Activated B cell treated with CpG ODN at 0.5 μM for 24 hours (primary cell): ENCODE measurements at regions of chr4 and their contacts with region 1.

Region 1: DNA sequence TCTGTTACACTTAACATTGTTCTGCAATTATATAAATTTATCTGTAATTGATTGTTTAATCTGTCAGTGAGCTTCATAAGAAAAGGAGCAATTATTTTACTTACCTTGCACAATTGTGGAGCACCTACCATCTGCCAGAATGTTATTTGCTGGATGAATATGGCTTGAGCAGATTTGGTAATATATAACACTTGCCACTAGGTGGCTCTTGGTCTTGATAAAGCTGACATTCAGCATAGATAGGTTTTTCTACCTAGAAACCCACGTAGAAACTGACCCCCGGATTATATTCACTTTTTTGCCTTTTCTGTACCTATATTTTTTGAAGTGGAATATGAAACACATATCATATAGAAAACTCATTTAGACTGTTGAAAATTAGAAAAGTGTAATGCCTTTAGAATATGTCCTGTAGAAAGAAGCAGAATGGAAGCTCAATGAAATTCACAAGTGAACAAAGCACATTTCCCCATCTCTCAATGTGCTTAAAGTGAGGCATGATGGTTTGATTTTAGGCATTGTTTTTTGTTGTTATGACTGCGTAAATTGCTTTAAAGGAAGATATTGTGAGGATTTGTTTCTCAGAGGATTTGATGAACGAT is 9.5 kb downstream of the RBPJ start:
- DNase-seq: no peak
- ATAC-seq: peak; percentile 81
- H3K4me3 Mint-ChIP-seq: no peak overlapping the region
- H3K27ac Mint-ChIP-seq: no peak overlapping the region
- H3K4me1 Mint-ChIP-seq: peaks cover 14% of the 10 kb centered on the region
- H3K27me3 Mint-ChIP-seq: no peaks in the 10 kb centered on the region
- CTCF ChIP-seq: peak; percentile 62

Region 2: GRCh38 chr4:25925486-25926201 is 404.6 kb before region 1 on chr4:
- CTCF ChIA-PET with region 1: interaction called, 5 read pairs
- POLR2A ChIA-PET with region 1: no interaction called
- intact Hi-C with region 1: loop called (anchors 2 kb)
- DNase-seq: no peak
- ATAC-seq: peak; percentile 57
- H3K4me3 Mint-ChIP-seq: no peak overlapping the region
- H3K27ac Mint-ChIP-seq: no peak overlapping the region
- H3K4me1 Mint-ChIP-seq: no peaks in the 10 kb centered on the region
- H3K27me3 Mint-ChIP-seq: no peaks in the 10 kb centered on the region
- CTCF ChIP-seq: no peak

Region 3: DNA sequence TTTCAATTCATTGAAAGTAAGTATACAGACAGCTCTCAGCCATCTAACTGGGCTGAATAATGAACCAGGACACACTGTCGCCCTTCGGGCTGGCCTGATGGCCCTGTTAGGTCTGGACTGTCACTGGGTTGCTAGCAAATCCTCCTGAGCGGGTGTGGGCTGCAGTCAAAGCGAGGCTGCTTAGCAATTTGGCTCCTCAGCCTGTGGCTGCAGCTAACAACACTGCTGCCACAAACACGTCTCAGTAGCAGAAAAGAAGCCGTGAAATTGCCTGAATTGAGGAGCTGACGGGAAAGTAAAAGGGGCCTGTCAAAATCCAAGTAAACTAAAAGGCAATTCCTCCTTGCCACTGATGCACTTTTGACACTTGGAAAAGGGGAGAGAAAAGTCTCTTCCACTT is 343.5 kb before region 1 on chr4:
- CTCF ChIA-PET with region 1: interaction called, 12 read pairs
- POLR2A ChIA-PET with region 1: no interaction called
- intact Hi-C with region 1: loop called (anchors 1 kb)
- DNase-seq: no peak
- ATAC-seq: no peak
- H3K4me3 Mint-ChIP-seq: no peak overlapping the region
- H3K27ac Mint-ChIP-seq: no peak overlapping the region
- H3K4me1 Mint-ChIP-seq: peaks cover 16% of the 10 kb centered on the region
- H3K27me3 Mint-ChIP-seq: peaks cover 3% of the 10 kb centered on the region
- CTCF ChIP-seq: no peak

Region 4: GRCh38 chr4:26028793-26029567 is 301.3 kb before region 1 on chr4:
- CTCF ChIA-PET with region 1: interaction called, 10 read pairs
- POLR2A ChIA-PET with region 1: no interaction called
- intact Hi-C with region 1: loop called (anchors 1 kb)
- DNase-seq: peak; percentile 55
- ATAC-seq: peak; percentile 92
- H3K4me3 Mint-ChIP-seq: no peak overlapping the region
- H3K27ac Mint-ChIP-seq: no peak overlapping the region
- H3K4me1 Mint-ChIP-seq: peaks cover 2% of the 10 kb centered on the region
- H3K27me3 Mint-ChIP-seq: peaks cover 13% of the 10 kb centered on the region
- CTCF ChIP-seq: no peak

Region 5: GRCh38 chr4:26061248-26061986 is 268.9 kb before region 1 on chr4:
- CTCF ChIA-PET with region 1: interaction called, 8 read pairs
- POLR2A ChIA-PET with region 1: no interaction called
- intact Hi-C with region 1: loop called (anchors 1 kb)
- DNase-seq: no peak
- ATAC-seq: peak; percentile 58
- H3K4me3 Mint-ChIP-seq: no peak overlapping the region
- H3K27ac Mint-ChIP-seq: no peak overlapping the region
- H3K4me1 Mint-ChIP-seq: no peaks in the 10 kb centered on the region
- H3K27me3 Mint-ChIP-seq: peaks cover 2% of the 10 kb centered on the region
- CTCF ChIP-seq: no peak

Region 6: DNA sequence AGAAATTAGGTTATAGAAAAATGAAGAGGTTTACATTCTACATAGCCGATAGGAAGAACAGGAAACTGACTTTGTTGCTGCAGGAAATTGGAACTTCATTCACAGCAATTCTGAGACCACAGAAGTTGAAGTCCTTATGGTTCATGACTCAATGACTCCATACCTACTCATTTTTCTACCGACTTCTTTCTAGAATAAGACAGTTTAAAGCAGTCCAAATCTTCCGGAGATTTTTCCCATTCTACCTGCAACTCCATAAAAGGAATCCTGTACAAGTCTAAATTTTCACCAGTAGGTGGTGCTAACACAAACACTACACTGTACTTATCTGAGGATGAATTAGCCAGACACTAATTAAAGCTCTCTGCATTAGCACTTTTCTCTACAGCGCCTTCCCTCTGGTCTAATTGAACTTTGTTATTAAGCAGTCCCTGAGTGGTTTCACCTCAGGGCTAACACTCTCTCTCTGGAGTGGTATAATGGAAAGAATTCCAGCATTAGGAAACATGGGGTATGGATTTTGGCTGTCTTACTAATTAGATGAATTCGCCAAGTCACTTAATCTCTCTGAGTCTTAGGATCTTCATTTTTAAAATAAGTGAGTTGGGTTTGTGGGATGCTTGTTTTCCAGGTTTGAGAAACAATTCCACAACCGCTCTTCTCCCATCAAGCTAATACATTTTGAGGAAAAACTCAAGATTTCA is 248.3 kb before region 1 on chr4:
- CTCF ChIA-PET with region 1: interaction called, 29 read pairs
- POLR2A ChIA-PET with region 1: no interaction called
- intact Hi-C with region 1: loop called (anchors 1 kb)
- DNase-seq: no peak
- ATAC-seq: peak; percentile 52
- H3K4me3 Mint-ChIP-seq: no peak overlapping the region
- H3K27ac Mint-ChIP-seq: no peak overlapping the region
- H3K4me1 Mint-ChIP-seq: peaks cover 14% of the 10 kb centered on the region
- H3K27me3 Mint-ChIP-seq: peaks cover 3% of the 10 kb centered on the region
- CTCF ChIP-seq: no peak

Region 7: DNA sequence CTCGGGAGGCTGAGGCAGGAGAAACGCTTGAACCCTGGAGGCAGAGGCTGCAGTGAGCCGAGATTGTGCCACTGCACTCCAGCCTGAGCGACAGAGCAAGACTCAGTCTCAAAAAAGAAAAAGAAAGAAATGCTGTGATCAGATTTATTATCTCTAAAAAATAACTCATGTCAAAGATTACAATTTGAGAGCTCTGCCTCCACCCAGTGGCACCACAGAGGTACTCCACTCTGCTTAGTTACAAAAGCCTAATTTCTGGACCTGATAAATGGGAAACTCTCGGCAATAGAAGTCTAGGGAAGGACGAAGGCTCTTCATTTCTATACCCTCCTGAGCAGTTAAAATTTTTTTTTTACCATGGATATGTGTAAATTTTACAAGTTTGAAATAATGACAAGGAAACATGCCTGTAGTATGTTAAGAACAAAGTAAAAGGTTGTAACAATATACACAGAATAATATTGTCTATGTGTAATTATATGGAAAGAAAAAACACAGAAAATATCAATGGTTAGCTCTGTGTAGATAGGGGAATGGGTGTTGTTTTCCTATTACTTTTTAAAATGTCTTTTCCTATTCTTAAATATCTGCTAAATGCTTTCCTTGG is 680.1 kb after region 1 on chr4:
- CTCF ChIA-PET with region 1: interaction called, 11 read pairs
- POLR2A ChIA-PET with region 1: no interaction called
- intact Hi-C with region 1: loop called (anchors 1 kb)
- DNase-seq: peak; percentile 31
- ATAC-seq: peak; percentile 85
- H3K4me3 Mint-ChIP-seq: no peak overlapping the region
- H3K27ac Mint-ChIP-seq: peak overlapping the region; percentile 80
- H3K4me1 Mint-ChIP-seq: peaks cover 5% of the 10 kb centered on the region
- H3K27me3 Mint-ChIP-seq: no peaks in the 10 kb centered on the region
- CTCF ChIP-seq: peak; percentile 95